Activated CD4-positive, alpha-beta T cell treated with anti-CD3 and anti-CD28 coated beads, Interleukin-2, amount 10 ng/mL, durations not matched to agents 7 days and 5 days (primary cell): ENCODE measurements at regions of chr11 and their contacts with region 1.

Region 1: DNA sequence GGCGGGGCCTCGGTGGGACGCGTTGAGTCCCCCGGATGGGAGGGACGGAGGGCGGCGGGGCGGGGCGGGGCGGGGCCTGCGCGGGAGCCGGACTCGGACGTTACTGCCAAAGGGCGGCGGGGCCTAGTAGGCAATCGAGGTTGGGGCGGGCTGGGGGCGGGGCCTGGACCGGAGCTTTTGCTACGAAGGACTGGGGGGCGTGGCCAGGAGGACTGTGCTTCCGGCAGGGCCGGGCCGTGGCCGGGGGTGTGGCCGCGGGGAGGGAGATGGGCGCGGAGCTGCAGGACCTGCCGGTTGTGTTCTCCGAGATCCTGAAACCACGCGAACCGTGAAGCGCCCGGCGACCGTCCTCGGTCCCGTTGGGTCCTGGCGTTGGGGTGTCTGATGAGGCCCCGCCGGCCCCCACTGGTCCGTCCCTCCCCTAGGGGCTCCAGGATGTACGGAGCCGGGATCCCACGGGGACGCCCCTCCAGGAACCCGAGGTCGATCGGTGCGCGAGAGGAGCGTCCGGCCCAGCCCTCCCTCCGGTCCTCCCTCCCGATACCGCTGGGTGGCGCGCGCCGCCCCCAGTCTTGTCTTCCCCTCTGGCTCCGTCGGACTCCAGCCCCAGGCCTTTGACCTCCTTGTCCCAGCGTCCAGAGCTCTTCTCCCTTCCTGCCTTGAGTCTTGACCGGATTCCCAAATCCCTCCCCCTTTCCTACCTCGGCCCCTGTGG is 648 bp upstream of the NUDT8 start:
- DNase-seq: peak; percentile 95
- H3K4me3 Mint-ChIP-seq: peak overlapping the region; percentile 84
- H3K27ac Mint-ChIP-seq: peak overlapping the region; percentile 95
- H3K4me1 Mint-ChIP-seq: peaks cover 20% of the 10 kb centered on the region
- H3K27me3 Mint-ChIP-seq: no peaks in the 10 kb centered on the region

Region 2: DNA sequence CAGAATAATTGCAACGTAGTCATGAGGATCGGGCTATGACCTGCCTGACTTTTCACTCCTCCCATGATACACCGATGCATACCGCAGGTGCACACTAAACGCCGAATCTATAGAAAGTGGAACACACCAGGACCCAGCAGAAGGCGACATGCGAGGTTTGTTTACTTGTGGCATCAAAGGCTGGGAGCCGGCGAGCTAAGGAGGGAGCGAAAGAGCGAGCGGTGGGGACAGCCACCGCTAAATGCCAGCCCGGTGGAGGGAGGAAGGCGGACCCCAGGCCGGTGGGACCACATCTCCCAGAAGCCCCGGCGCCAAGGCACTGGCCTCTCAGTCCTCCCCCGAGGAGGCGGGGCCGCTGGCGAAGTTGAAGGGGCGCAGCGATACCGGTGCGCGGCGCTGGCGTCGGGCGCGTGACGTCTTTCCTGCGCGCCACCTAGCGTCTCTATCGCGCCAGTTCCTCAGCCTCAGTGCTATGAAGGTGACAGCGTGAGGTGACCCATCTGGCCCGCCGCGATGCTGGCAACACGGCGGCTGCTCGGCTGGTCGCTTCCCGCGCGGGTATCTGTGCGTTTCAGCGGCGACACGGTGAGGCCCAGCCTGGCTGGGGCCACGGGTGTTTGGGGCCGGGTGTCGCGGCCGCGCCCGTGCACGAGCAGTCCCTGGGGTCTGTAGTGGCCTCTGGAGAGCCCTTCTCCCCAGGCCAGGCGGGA is 23.7 kb before region 1 on chr11 and contains the start of gene NDUFV1:
- CTCF ChIA-PET with region 1: interaction called, 18 read pairs
- POLR2A ChIA-PET with region 1: interaction called, 3 read pairs
- DNase-seq: peak; percentile 97
- H3K4me3 Mint-ChIP-seq: peak within 1 kb of the TSS; percentile 93
- H3K27ac Mint-ChIP-seq: peak within 1 kb of the TSS; percentile 93
- H3K4me1 Mint-ChIP-seq: peaks cover 19% of the 10 kb centered on the region
- H3K27me3 Mint-ChIP-seq: peaks cover 7% of the 10 kb centered on the region
- total RNA-seq, gene NDUFV1: 204 to 228 TPM

Region 3: DNA sequence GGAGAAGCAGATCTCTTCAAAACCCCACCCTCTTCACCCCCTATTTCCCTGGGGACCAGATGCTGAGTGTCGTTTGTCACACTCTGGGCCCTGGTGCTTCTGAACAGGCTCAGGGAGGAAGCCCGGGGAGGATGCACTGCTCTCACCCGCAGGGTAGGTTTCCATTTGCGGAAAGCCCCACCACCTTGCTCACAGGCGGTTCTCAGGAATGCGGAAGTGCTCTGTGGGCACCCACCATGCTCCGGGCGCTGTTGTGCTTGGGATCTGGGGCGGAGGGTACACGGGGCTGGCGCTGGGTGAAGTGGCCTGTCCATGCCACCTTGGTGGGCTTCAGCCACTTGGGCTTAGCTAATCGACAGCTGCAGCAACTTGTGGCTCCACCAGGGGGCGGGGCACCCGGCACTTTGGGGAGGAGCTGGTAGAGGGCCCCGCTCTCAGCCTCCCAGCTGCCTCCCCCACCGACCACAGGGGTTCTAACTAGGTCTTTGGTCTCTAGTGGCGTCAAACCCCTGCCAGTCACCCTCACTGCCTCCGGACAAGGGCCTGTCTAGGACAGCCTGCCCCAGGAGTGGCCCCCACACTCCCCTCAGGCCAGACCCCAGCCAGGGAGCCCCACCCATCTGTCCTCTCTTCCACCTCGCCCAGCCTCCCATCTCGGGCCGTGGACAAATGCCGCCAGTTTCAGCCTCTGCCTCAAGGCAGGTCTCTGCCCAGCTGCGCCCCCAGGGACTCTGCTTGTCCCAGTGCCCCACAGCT is 16.2 kb before region 1 on chr11:
- CTCF ChIA-PET with region 1: interaction called, 84 read pairs
- POLR2A ChIA-PET with region 1: interaction called, 5 read pairs
- DNase-seq: peak; percentile 87
- H3K4me3 Mint-ChIP-seq: peak overlapping the region; percentile 71
- H3K27ac Mint-ChIP-seq: peak overlapping the region; percentile 99
- H3K4me1 Mint-ChIP-seq: peaks cover 36% of the 10 kb centered on the region
- H3K27me3 Mint-ChIP-seq: no peaks in the 10 kb centered on the region

Region 4: DNA sequence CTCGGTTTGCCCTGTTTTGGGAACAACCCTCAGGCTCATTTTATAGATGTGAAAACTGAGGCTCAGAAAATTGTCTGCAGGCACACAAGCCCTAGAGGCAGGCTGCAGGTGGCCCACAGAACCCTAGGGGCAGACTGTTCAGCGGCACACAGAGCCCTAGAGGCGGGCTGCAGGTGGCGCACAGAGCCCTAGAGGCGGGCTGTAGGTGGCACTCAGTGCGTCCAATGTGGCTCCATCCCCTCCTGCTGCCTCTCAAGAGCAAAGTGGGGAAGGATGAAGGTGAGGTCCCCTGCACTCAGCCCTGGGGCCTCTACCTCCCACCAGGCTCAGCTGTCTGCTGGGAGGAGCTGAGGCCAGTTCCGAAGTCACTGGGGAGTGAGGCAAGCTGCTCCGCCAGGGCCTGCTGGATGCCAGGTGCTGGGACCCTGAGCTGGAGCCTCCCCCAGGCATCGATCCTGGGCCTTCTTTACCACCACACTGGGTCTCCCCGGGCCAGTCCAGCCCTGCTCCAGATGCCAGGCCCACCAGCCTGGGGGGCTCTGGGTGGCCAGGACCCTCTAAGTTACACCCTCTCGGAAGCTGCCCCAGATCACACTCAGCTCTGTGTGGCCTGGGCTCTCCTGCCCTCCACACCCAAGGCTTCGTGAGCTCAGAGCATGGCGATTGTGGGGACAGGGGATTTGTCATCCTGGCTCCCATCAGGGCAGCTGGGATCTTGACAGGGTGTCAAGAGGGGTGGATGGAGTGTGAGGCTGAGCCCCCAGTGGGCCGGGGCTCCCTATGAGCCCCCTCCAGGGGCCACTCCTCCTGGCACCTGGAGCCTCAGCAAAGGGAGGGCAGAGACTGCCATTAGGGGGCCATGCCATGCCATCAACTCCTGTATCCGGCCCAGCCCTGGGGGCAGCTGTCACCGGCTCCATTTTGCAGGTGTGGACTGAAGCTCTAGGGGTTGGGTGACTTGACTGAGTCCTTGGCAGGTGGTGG is 18.0 kb after region 1 on chr11:
- CTCF ChIA-PET with region 1: interaction called, 114 read pairs
- POLR2A ChIA-PET with region 1: no interaction called
- DNase-seq: peak; percentile 72
- H3K4me3 Mint-ChIP-seq: no peak overlapping the region
- H3K27ac Mint-ChIP-seq: no peak overlapping the region
- H3K4me1 Mint-ChIP-seq: peaks cover 49% of the 10 kb centered on the region
- H3K27me3 Mint-ChIP-seq: peaks cover 9% of the 10 kb centered on the region

Region 5: DNA sequence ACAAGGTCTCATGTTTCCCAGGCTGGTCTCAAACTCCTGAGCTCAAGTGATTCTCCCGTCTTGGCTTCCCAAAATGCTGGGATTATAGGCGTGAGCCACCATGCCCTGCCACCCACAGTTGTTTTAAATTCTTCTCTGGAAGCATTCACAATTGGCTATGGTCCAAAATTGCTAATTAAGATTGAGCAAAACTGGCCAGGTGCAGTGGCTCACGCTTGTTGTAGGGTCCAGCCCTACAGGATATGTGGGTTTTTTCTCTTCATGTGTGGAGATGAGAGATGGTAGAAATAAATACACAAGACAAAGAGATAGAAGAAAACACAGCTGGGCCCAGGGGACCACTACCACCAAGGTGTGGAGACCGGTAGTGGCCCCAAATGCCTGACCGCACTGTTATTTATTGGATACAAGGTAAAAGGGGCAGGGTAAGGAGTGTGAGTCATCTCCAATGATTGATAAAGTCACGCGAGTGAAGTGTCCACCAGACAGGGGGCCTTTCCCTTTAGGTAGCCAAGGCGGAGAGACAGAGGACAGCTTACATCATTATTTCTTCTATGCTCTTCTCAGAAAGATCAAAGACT is 28.4 kb after region 1 on chr11:
- CTCF ChIA-PET with region 1: interaction called, 30 read pairs
- POLR2A ChIA-PET with region 1: no interaction called
- DNase-seq: no peak
- H3K4me3 Mint-ChIP-seq: no peak overlapping the region
- H3K27ac Mint-ChIP-seq: no peak overlapping the region
- H3K4me1 Mint-ChIP-seq: peaks cover 7% of the 10 kb centered on the region
- H3K27me3 Mint-ChIP-seq: no peaks in the 10 kb centered on the region